Mammary epithelial cell (primary cell): ENCODE measurements at regions of chr12 and their contacts with region 1.

Region 1: DNA sequence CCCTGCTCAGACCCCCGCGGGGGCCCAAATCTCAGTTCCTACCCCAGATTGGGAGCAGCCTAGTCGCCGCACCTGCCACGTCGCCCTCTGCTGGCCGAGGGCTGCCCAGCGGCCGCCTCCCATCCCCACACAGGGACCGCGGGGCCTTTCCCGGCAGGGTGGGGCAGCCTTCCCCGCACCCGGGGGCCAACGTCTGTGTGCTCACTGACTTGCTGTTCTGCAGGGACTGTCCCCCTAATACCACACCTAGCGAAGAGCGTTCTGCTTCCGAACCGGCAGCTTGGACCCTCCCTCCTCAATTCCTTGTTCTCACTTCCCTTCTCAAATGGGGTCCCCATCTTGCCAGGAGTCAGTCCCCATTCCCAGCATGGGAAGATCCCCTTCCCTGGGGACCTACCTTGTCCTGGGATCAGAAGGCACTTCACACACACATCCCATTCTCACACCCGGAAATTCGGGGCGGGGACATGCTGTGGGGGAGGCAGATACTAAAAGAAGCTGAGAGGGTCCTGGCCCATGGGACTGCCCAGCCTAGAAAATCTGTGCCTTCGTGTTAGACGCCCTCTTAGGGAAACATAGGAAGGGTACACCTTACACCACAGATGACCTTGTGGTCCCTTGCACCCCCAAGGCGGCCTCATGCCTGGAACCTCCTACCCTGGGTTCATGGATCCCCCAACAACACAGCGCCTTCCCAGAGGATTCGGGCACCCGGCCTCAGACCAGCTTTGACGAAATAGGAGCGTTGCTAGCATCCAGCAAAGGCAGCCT is 16.4 kb downstream of the ACVRL1 start:
- DNase-seq: no peak
- H3K4me3 ChIP-seq: no peak overlapping the region
- H3K27ac ChIP-seq: no peak overlapping the region
- H3K4me1 ChIP-seq: no peaks in the 10 kb centered on the region
- H3K27me3 ChIP-seq: no peaks in the 10 kb centered on the region
- CTCF ChIP-seq: peak; percentile 73 to 91

Region 2: DNA sequence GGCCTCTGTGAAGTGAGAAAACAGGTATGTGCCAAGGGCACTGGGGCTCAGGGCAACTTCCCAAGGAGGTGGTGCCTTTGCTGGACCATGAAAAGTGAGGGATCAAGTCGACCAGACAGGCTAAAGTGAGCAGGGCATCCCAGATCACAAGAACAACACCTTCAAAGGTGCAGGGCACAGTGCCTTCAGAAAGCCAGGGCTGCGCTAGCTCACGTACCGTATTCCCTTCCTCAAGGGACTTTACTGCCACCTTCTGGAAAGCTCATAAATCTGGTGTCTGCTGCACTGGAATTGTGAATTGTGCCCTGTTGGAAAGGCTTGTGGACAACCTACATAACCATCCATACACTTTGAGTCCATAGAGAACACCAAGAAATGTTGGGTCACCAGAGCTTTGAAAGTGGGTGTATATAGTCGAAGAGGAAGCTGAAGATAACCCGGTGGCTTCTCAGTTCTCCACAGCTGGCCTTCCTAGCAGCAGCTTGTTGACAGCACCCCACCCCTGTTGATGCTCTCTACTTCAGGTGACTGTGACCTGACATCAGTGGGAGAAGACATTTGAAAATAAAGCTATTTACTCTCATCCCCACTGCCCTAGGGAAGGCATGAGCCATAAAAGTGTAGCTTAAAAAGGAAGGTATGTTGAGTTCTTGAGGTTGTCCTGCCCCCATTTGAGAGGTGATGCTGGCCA is 99.7 kb before region 1 on chr12:
- CTCF ChIA-PET with region 1: no interaction called
- dilution Hi-C with region 1: no loop called
- in situ Hi-C with region 1: no loop called
- intact Hi-C with region 1: no loop called
- DNase-seq: peak; percentile 57
- H3K4me3 ChIP-seq: no peak overlapping the region
- H3K27ac ChIP-seq: no peak overlapping the region
- H3K4me1 ChIP-seq: peaks cover 30% of the 10 kb centered on the region
- H3K27me3 ChIP-seq: peaks cover 5% of the 10 kb centered on the region
- CTCF ChIP-seq: peak; percentile 39 to 76

Region 3: DNA sequence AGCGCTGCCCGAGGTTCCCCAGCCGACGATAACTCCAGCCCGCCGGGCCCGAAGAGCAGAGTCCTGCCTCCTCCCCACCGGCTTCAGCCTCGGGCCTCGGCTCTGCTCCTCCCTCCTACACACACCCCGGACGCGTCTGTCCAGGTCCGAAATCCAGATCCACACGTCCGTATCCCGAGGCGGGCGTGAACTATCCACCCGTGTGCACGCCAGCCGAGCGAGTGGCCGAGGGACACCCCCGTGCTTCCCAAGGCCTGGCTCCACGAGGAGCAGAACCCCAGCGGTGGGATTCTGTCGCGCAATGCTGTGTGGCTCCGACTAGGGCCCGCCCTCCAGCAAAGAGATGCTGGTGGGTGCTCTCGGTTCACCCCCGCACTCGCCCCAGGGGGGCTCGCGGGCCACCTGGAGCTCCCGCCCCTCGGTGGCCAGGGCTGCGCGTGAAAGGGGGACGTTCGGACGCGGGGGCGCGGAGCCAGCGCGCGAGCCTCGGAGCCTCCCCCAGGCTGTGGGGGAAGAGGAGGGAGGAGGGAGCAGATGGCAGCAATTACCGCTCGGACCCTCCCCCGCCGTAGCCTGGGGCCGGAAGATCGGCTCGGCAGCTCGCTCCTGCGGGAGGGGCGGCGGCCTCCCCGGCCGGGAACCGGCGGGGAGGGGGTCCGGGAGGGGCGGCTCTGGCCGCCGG is 54.7 kb before region 1 on chr12:
- CTCF ChIA-PET with region 1: no interaction called
- dilution Hi-C with region 1: no loop called
- in situ Hi-C with region 1: no loop called
- intact Hi-C with region 1: no loop called
- DNase-seq: no peak
- H3K4me3 ChIP-seq: no peak overlapping the region
- H3K27ac ChIP-seq: no peak overlapping the region
- H3K4me1 ChIP-seq: peaks cover 8% of the 10 kb centered on the region
- H3K27me3 ChIP-seq: peaks cover 30% of the 10 kb centered on the region
- CTCF ChIP-seq: no peak

Region 4: DNA sequence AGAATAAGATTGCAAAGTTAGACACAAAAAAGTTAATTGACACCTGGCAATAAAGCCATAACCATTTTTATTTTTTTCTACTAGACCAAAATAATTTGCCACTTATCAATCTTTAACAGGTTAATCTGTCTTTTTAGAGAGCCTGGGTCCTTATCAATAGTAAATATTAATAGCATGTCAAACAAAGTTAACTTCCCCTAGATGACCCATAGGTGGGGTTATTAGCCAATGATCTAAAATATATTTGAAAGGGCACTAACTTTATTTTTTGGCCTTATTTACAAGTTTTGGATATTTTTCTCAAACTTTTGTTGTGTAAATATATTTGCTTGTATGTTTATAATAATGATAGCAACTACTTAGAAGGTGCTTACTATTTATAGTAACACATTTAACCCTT is 31.8 kb before region 1 on chr12:
- CTCF ChIA-PET with region 1: no interaction called
- dilution Hi-C with region 1: no loop called
- in situ Hi-C with region 1: no loop called
- intact Hi-C with region 1: loop called (anchors 1 kb)
- DNase-seq: no peak
- H3K4me3 ChIP-seq: no peak overlapping the region
- H3K27ac ChIP-seq: no peak overlapping the region
- H3K4me1 ChIP-seq: no peaks in the 10 kb centered on the region
- H3K27me3 ChIP-seq: no peaks in the 10 kb centered on the region
- CTCF ChIP-seq: peak; percentile 24 to 40

Region 5: GRCh38 chr12:51970904-51971646 is 47.4 kb after region 1 on chr12:
- CTCF ChIA-PET with region 1: no interaction called
- dilution Hi-C with region 1: loop called (anchors 5 kb)
- in situ Hi-C with region 1: loop called (anchors 5 kb)
- intact Hi-C with region 1: no loop called
- DNase-seq: peak; percentile 87
- H3K4me3 ChIP-seq: peak overlapping the region in 2 of 3 experiments; percentile 26 to 29
- H3K27ac ChIP-seq: peak overlapping the region; percentile 64
- H3K4me1 ChIP-seq: peaks cover 43% of the 10 kb centered on the region
- H3K27me3 ChIP-seq: no peaks in the 10 kb centered on the region
- CTCF ChIP-seq: peak; percentile 52 to 75

Region 6: DNA sequence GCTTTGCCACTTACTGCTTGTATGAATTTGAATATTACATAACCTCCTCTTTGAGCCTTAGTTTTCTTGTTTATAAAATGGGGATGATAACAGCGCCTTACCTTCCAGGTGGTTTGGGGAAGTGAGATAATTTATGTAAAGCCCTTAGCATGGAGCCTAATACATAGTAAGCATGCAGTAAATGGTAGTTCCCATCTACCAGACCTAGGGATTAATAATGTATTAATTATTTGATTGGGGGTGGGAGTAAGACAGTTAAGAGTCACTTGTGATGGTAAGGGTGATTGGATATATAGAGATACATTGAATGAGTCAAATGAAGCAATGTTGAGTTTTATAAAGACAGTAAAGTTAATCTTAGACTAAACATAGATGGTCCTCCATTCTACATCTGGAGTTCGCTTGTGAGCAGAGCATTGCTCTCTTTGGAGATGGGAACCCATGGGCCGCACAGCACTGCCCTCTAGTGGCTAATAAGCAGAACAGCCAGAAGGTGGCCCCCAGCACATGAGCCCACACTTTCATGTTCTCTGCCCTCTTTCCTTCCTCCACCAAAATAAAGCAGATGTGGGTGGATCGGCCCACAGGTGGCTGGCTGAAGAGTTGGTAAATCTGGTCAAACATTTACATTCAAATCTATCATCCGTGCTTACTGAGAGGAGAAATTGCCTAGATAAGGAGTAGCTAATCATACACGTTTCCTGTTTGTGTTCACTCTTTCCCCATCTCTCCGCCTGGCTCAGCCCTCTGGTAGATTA is 56.5 kb after region 1 on chr12:
- CTCF ChIA-PET with region 1: no interaction called
- dilution Hi-C with region 1: loop called (anchors 5 kb)
- in situ Hi-C with region 1: loop called in 1 of 2 experiments (anchors 5 kb)
- intact Hi-C with region 1: loop called (anchors 1 kb)
- DNase-seq: peak; percentile 44
- H3K4me3 ChIP-seq: no peak overlapping the region
- H3K27ac ChIP-seq: no peak overlapping the region
- H3K4me1 ChIP-seq: no peaks in the 10 kb centered on the region
- H3K27me3 ChIP-seq: no peaks in the 10 kb centered on the region
- CTCF ChIP-seq: peak; percentile 93 to 95